ENCODE measurements at regions of chr7 and their contacts with region 1.

Region 1: DNA sequence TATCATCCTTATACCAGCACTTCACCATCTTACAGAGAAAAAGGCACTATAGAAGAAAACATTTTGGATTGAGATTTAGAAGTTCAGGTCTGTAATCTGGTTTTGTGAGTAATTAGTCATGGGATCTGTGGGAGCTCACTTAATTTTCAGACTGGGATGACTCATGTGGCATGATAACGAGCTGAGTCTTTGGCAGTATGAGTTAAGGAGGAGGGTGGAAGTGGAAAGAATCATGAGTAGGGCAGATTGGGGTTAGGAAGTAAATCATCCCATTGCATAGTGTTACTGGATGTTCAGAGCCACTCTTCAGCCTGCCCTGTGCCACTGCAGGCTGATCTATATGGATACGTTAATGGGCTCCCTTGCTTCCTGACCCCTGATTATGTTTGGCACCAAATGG is 64.9 kb downstream of the ZNF92 start:
- ATAC-seq: peak in 5 of 8 experiments; percentile 58 to 100 (median 91)
- H3K4me3 ChIP-seq: no peak overlapping the region
- H3K27ac ChIP-seq: no peak overlapping the region
- H3K4me1 ChIP-seq: no peaks in the 10 kb centered on the region

Region 2: GRCh38 chr7:65338346-65338745 is 100.3 kb before region 1 on chr7:
- in situ Hi-C with region 1: loop called in 1 of 9 experiments (anchors 25 kb)
- ATAC-seq: no peak
- H3K4me3 ChIP-seq: no peak overlapping the region
- H3K27ac ChIP-seq: no peak overlapping the region
- H3K4me1 ChIP-seq: no peaks in the 10 kb centered on the region